PC-9 (cell line): ENCODE measurements at regions of chr7 and their contacts with region 1.

Region 1: GRCh38 chr7:55158541-55159382 is 139.9 kb downstream of the EGFR start:
- DNase-seq: peak; percentile 67 to 76
- H3K4me3 ChIP-seq: no peak overlapping the region
- H3K27ac ChIP-seq: peak overlapping the region; percentile 7; the same call in 1 of the 2 replicates
- H3K4me1 ChIP-seq: peaks cover 8% of the 10 kb centered on the region
- H3K27me3 ChIP-seq: no peaks in the 10 kb centered on the region
- CTCF ChIP-seq: no peak

Region 2: GRCh38 chr7:55086413-55087201 is 72.2 kb before region 1 on chr7:
- CTCF ChIA-PET with region 1: interaction called, 21 read pairs
- POLR2A ChIA-PET with region 1: interaction called, 3 read pairs
- intact Hi-C with region 1: no loop called
- DNase-seq: peak; percentile 65 to 87
- H3K4me3 ChIP-seq: no peak overlapping the region
- H3K27ac ChIP-seq: peak overlapping the region; percentile 25
- H3K4me1 ChIP-seq: peaks cover 19% of the 10 kb centered on the region
- H3K27me3 ChIP-seq: no peaks in the 10 kb centered on the region
- CTCF ChIP-seq: no peak

Region 3: GRCh38 chr7:55198634-55199392 is 40.1 kb after region 1 on chr7:
- CTCF ChIA-PET with region 1: no interaction called
- POLR2A ChIA-PET with region 1: no interaction called
- intact Hi-C with region 1: loop called (anchors 5 kb)
- DNase-seq: no peak
- H3K4me3 ChIP-seq: no peak overlapping the region
- H3K27ac ChIP-seq: no peak overlapping the region
- H3K4me1 ChIP-seq: no peaks in the 10 kb centered on the region
- H3K27me3 ChIP-seq: no peaks in the 10 kb centered on the region
- CTCF ChIP-seq: no peak

Region 4: GRCh38 chr7:55509322-55509721 is 350.6 kb after region 1 on chr7:
- CTCF ChIA-PET with region 1: no interaction called
- POLR2A ChIA-PET with region 1: no interaction called
- intact Hi-C with region 1: no loop called
- DNase-seq: no peak
- H3K4me3 ChIP-seq: no peak overlapping the region
- H3K27ac ChIP-seq: no peak overlapping the region
- H3K4me1 ChIP-seq: peaks cover 26% of the 10 kb centered on the region
- H3K27me3 ChIP-seq: no peaks in the 10 kb centered on the region
- CTCF ChIP-seq: no peak